Prostate gland (tissue), 2 donors: ENCODE measurements at regions of chr15 and their contacts with region 1.

Region 1: DNA sequence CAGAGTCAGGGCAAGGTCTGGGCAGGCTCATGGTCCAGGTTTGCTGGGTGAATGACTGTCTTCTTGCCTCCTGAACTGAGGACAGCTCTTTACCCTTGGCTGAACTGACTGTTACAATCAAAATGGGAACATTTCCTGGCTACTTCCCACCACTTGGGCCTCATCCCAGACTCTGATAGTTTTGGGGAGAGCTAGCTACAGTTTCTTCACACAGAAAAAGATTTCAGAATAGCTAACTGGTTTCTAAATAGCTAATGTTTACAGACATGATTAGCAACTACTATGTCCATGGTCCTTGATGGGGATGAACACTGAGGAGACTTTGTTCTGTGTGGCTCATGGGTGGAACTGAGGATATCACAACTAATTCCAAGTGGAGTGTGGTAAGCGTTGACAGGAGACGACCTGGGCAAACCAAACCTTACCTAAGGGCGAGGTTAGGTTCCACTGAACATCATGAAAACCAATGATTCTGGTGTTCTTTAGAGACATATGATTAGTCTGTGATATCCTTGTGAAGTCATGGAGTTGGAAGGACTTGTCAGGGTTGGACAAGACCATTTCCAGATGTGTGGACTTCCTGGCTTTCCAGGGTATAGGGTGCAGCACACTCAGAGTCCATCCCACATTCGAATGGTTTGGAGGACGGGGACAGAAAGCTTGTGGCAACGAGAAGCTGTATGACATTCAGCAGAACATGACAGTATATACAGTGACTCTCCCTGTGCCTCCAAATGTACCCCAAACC is 7.3 kb downstream of the ALPK3 start:
- DNase-seq: no peak
- H3K4me3 ChIP-seq: no peak overlapping the region
- H3K27ac ChIP-seq: peak overlapping the region in 1 of 2 donors; percentile 2
- H3K4me1 ChIP-seq: peaks cover under 1% of the 10 kb centered on the region
- H3K27me3 ChIP-seq: no peaks in the 10 kb centered on the region
- CTCF ChIP-seq: no peak
- POLR2A ChIP-seq: no peak

Region 2: DNA sequence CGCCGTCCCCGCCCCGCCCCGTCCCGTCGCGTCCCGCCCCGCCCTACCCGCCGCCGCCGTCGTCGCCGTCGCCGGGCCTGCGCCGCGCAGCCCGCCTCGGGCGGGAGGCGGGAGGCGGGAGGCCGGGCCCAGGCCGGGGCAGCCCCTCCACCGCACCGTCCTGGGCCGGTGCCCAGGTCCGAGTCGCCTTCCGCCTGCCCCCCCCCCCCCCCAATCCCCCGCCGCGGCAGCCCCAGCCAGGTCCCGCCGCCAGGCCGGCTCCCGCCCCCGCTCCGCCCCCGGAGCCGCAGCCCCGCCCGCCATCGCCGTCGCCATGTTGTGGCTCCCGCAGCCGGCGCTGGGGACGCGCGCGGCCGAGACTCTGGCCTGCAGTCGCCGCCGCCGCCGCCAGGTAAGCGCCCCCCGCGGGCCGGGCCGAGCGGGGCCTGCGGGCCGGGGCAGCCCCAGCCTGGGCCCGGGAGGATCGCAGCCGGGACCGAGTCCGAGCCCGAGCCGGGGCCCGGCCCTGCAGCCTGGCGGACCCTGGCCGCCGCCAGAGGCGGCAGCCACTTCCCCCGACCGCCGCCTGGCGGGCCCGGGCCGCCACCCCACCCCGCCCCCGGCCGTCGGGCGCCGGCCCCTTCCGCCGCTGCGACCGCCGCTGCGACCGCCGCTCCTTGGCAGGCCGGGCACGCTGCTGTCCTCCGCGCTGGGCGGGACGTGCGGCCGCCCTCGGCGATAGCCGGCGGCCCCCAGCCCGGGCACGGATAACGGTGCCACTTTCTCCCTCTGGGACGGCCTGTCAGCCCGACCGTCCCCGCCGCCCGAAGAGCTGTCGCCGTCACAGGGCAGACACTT is 75.9 kb before region 1 on chr15 and contains the start of gene ZNF592:
- intact Hi-C with region 1: loop called (anchors 5 kb)
- DNase-seq: peak; percentile 73
- H3K4me3 ChIP-seq: peak within 1 kb of the TSS; percentile 81 to 86
- H3K27ac ChIP-seq: peak within 1 kb of the TSS; percentile 99 to 100
- H3K4me1 ChIP-seq: peaks cover 3% of the 10 kb centered on the region
- H3K27me3 ChIP-seq: no peaks in the 10 kb centered on the region
- CTCF ChIP-seq: peak in 2 of 4 experiments; percentile 9 to 76
- POLR2A ChIP-seq: no peak
- total RNA-seq, gene ZNF592: 20.8 to 38.7 TPM